PC-9 (cell line): ENCODE measurements at regions of chr20 and their contacts with region 1.

Region 1: DNA sequence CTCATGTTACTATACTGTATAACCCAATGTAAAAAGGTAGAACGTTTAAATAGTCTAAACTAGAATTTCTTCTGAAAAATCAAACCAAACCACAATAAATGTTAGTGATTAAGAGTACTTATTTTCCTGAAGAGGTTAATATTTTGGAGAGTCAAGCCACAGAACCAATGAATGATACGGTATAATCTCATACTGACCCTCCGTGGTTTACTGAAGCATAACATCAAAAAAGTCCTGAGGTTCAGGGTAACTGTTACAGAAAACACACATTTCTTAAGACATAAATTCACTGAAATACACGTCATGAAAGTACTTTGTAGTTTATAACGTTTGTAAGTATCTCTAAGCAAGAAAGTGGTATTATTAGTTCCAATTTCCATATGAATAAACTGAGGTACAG is 28.9 kb downstream of the ESF1 start:
- DNase-seq: no peak
- H3K4me3 ChIP-seq: no peak overlapping the region
- H3K27ac ChIP-seq: no peak overlapping the region
- H3K4me1 ChIP-seq: no peaks in the 10 kb centered on the region
- H3K27me3 ChIP-seq: no peaks in the 10 kb centered on the region
- CTCF ChIP-seq: no peak

Region 2: GRCh38 chr20:13430346-13431002 is 325.3 kb before region 1 on chr20:
- CTCF ChIA-PET with region 1: no interaction called
- POLR2A ChIA-PET with region 1: no interaction called
- intact Hi-C with region 1: no loop called
- DNase-seq: peak; percentile 37 to 42
- H3K4me3 ChIP-seq: no peak overlapping the region
- H3K27ac ChIP-seq: no peak overlapping the region
- H3K4me1 ChIP-seq: no peaks in the 10 kb centered on the region
- H3K27me3 ChIP-seq: no peaks in the 10 kb centered on the region
- CTCF ChIP-seq: no peak

Region 3: GRCh38 chr20:13771853-13772453 is 16.1 kb after region 1 on chr20:
- CTCF ChIA-PET with region 1: no interaction called
- POLR2A ChIA-PET with region 1: no interaction called
- intact Hi-C with region 1: no loop called
- DNase-seq: peak in 1 of 2 experiments; percentile 43
- H3K4me3 ChIP-seq: no peak overlapping the region
- H3K27ac ChIP-seq: no peak overlapping the region
- H3K4me1 ChIP-seq: no peaks in the 10 kb centered on the region
- H3K27me3 ChIP-seq: no peaks in the 10 kb centered on the region
- CTCF ChIP-seq: peak; percentile 83

Region 4: GRCh38 chr20:13788167-13788834 is 32.5 kb after region 1 on chr20:
- CTCF ChIA-PET with region 1: interaction called, 19 read pairs
- POLR2A ChIA-PET with region 1: no interaction called
- intact Hi-C with region 1: no loop called
- DNase-seq: peak; percentile 34 to 53
- H3K4me3 ChIP-seq: no peak overlapping the region
- H3K27ac ChIP-seq: no peak overlapping the region
- H3K4me1 ChIP-seq: peaks cover 21% of the 10 kb centered on the region
- H3K27me3 ChIP-seq: no peaks in the 10 kb centered on the region
- CTCF ChIP-seq: peak; percentile 66